A549 (cell line): ENCODE measurements at regions of chr1 and their contacts with region 1.

Region 1: GRCh38 chr1:5514519-5515183 is 477.6 kb downstream of the NPHP4 start:
- DNase-seq: peak; percentile 25 to 67
- ATAC-seq: peak; percentile 81 to 91
- H3K4me3 ChIP-seq: no peak overlapping the region
- H3K27ac ChIP-seq: no peak overlapping the region
- H3K4me1 ChIP-seq: no peaks in the 10 kb centered on the region
- CTCF ChIP-seq: peak; percentile 61
- EP300 ChIP-seq: no peak
- POLR2A ChIP-seq: no peak
- RAD21 ChIP-seq: peak in 1 of 2 experiments; percentile 32; a peak in 2 of 5 replicates

Region 2: DNA sequence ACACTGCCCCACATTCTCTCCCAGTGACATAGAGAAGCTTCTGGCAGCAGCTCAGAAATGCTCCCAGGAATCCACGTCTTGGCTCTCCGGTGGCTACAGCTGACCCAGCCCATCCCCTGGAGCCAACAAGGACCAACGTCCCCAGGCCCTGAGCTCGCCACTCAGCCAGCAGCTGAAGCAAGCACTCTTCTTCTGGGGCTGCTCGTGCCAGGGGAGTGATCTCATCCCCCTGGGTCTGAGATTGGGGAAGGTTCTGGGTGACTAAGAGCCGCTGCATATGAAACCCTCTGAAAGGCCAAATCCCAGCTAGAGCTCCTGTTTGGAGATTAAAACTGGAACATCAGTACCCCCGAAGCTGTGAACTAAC is 10.3 kb before region 1 on chr1:
- CTCF ChIA-PET with region 1: interaction called, 13 read pairs
- POLR2A ChIA-PET with region 1: no interaction called
- DNase-seq: no peak
- ATAC-seq: 0 out of 6 replicates have a peak, but pooled peaks of 1 of the 2 experiments have one; percentile 19
- H3K4me3 ChIP-seq: no peak overlapping the region
- H3K27ac ChIP-seq: no peak overlapping the region
- H3K4me1 ChIP-seq: no peaks in the 10 kb centered on the region
- CTCF ChIP-seq: no peak
- EP300 ChIP-seq: no peak
- POLR2A ChIP-seq: no peak
- RAD21 ChIP-seq: no peak

Region 3: DNA sequence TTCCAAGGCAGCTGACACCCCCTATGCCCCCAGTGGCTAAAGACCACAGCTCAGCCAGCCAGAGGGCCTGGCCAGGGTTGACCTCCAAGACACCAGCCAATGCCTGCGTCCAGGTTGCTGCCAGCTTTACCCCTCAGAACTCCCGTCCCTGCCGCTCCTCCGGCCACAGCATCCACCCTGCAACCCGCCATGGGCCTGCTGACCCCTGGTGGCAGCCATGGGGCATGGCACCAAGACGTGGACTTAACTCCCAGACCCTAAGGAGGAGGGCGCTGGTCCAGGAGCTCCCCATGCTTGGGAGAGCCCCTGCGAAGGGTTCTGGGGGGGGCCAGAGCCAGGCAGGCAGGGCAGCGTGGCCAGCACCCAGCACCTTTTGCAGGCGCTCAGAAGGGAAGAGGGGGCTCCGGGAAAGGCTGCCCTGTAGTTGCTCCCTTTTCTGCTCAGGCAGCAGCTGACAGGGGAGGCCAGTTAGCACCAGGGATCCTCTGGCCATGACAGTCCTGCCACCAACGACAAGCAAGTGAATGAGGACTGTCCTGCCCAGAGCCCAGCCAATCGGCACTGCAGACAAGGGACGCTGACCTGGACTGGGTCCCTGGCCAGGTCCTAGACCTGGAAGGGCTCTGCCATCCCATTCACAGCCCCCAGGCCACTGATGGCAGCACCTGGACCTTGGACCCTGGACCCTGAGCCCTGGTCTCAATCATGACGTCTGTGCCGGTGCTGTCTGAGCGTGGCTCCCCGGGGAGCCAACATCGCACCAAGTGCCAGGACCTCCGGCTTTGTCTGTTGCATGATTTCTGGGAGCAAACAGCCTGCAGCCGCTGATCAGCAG is 231.3 kb after region 1 on chr1:
- CTCF ChIA-PET with region 1: interaction called, 53 read pairs
- POLR2A ChIA-PET with region 1: no interaction called
- DNase-seq: peak; percentile 71 to 80
- ATAC-seq: peak; percentile 79 to 97
- H3K4me3 ChIP-seq: no peak overlapping the region
- H3K27ac ChIP-seq: no peak overlapping the region
- H3K4me1 ChIP-seq: no peaks in the 10 kb centered on the region
- CTCF ChIP-seq: peak; percentile 73
- EP300 ChIP-seq: no peak
- POLR2A ChIP-seq: no peak
- RAD21 ChIP-seq: peak; percentile 78 to 81

Region 4: DNA sequence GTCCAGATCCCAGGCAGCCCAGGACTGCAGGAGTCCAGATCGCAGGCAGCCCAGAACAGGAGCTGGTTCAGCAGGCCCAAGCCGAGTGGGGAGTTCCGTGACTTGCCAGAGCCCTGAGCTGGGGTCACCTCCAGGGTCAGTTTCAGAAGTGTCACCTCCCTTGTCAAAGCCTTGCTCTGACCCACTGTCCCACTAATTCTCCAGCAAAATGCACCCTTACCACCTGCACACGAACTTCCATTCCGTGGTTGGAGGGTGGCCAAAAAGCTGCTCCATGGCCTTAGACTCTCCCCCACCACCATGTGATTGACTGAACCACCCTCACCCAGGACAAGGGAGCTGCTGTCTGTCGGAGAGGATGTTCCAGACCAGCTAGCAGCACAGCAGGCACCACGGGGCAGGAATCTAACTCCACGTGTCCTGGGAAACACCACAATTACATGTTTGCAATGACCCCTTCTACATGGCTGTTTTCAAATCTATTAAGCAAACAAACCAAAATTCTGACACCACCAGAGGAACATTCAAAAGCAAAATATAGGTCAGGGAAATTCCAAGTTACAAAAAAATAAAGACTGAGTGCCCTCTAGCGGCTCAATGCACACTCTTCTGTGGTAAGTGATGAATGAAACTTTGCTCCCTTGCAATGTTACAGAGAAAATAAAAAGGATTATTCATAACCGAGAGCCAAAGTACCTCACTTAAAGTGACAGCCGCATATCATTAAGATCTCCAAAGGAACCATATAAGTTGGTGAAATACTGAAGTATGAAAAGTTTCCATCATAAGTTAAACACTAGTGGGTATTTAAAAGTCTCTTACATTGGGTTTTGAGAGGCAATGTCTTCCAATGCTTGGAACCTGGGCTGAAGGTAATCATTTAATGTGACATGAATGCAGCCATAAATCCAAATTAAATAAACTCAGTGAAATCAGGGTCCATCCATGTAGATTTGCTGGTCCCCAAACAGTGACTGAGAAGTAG is 401.2 kb after region 1 on chr1:
- CTCF ChIA-PET with region 1: interaction called, 33 read pairs
- POLR2A ChIA-PET with region 1: no interaction called
- DNase-seq: peak; percentile 16 to 25
- ATAC-seq: peak; percentile 81 to 85; a peak in 5 of 6 replicates
- H3K4me3 ChIP-seq: no peak overlapping the region
- H3K27ac ChIP-seq: no peak overlapping the region
- H3K4me1 ChIP-seq: no peaks in the 10 kb centered on the region
- CTCF ChIP-seq: peak; percentile 63
- EP300 ChIP-seq: no peak
- POLR2A ChIP-seq: no peak
- RAD21 ChIP-seq: peak; percentile 42 to 53

Region 5: DNA sequence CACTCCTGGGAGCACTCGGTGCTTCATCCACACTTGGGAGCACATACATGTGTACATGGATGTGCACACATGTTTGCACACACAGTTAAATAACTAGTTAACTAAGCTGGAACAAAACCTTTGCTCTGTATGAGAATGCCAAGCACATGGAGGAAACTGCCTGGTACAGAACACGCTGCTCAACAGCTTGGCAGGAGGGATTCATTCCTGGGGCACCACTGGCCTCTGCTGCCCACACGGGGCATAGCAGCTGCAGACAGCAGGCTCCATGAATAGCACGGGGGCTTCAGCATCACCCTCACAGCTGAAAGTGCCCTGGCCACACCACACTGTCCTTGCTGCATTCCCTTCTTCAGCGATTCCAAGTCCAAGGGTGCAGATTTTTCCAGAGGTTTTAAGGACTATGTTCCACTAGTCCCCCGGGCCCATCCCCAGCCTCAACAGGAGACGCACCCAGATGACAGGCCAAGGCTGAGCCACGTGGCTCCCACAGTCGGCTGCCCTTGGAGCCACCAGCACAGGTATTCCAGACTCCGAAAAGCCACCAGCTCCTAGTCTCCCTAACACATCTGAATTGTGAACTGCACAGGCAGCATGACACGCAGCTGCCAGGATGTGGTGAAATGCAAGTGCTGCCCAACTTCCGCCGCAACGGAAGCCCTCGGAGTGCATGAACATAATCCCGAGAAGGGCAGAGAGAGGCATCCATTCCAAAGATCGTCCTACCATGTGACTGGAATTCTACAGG is 460.7 kb after region 1 on chr1:
- CTCF ChIA-PET with region 1: interaction called, 22 read pairs
- POLR2A ChIA-PET with region 1: no interaction called
- DNase-seq: peak in 1 of 2 experiments; percentile 46
- ATAC-seq: peak; percentile 81 to 88
- H3K4me3 ChIP-seq: no peak overlapping the region
- H3K27ac ChIP-seq: no peak overlapping the region
- H3K4me1 ChIP-seq: peaks cover 2% of the 10 kb centered on the region; the same call in 2 of the 3 replicates
- CTCF ChIP-seq: peak; percentile 35
- EP300 ChIP-seq: no peak
- POLR2A ChIP-seq: no peak
- RAD21 ChIP-seq: peak; percentile 51 to 72